Aorta (tissue), 5 donors: ENCODE measurements at regions of chr11 and their contacts with region 1.

Region 1: DNA sequence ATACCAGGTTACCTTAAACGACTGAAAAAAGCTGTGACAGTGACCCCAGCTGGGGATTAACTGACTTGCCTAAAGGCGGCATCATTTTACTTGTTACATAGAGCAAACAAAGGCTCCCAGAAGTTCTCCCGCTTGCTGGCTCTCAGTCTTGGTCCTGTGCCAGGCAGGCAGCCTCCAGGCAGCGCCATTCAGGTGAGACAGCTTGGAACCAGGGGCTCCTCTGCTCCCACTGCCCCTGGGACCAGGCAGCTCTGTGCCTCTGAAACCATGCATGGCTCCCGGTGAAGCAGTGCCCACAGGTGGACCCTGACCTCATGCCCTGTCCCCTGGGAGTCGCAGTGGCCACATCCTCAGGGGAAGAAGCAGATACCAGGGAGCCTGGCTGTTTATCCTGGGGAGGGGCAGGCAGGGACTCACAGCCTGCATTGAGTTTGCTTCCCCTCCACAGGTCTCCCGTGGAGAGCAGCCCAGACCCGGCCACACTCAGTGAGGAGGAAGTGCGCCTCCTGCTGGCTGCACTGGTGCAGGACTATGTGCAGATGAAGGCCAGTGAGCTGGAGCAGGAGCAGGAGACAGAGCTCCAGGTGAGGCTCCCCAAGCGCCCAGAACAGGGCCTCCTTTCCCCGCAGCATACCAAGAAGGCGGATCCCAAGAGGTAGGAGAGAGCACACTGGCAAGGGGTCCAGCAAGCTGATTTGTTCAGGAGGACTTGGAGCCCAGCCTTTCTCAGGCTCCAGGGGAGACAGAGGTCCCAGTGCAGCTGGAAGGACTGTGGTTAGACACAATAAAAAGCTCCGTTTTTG is 15.6 kb upstream of the CYP2R1 start:
- DNase-seq: peak; percentile 90 to 94
- ATAC-seq: peak; percentile 84
- H3K4me3 ChIP-seq: no peak overlapping the region
- H3K27ac ChIP-seq: no peak overlapping the region
- H3K4me1 ChIP-seq: no peaks in the 10 kb centered on the region
- H3K27me3 ChIP-seq: no peaks in the 10 kb centered on the region

Region 2: DNA sequence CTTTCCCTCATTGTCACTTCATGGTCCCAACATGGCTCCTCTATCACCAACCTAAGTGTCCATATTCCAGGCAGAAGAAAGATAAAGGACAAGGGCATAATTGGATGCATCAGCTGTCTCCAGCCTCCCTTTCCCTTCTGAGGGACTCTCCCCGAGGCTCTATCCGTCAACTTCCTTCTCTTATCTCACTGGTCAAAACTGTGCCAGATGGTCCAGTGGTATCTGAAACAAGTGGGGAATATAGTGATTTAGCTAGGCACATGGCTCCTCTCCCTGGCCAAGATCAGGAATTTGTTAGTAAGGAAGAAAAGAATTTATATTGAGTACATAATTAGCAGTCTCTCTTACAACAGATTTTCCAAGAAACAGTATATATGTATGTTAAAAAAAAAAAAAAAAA is 957.7 kb before region 1 on chr11:
- intact Hi-C with region 1: loop called in 1 of 2 experiments (anchors 5 kb)
- DNase-seq: no peak
- ATAC-seq: no peak
- H3K4me3 ChIP-seq: no peak overlapping the region
- H3K27ac ChIP-seq: no peak overlapping the region
- H3K4me1 ChIP-seq: no peaks in the 10 kb centered on the region
- H3K27me3 ChIP-seq: peaks cover 0 to 2% of the 10 kb centered on the region in 2 donors

Region 3: GRCh38 chr11:14537134-14537599 is 370.4 kb before region 1 on chr11:
- intact Hi-C with region 1: loop called (anchors 2 to 5 kb)
- DNase-seq: peak in 1 of 2 donors; percentile 47
- ATAC-seq: peak; percentile 62
- H3K4me3 ChIP-seq: no peak overlapping the region
- H3K27ac ChIP-seq: no peak overlapping the region
- H3K4me1 ChIP-seq: peaks cover 0 to 3% of the 10 kb centered on the region in 2 donors
- H3K27me3 ChIP-seq: no peaks in the 10 kb centered on the region

Region 4: DNA sequence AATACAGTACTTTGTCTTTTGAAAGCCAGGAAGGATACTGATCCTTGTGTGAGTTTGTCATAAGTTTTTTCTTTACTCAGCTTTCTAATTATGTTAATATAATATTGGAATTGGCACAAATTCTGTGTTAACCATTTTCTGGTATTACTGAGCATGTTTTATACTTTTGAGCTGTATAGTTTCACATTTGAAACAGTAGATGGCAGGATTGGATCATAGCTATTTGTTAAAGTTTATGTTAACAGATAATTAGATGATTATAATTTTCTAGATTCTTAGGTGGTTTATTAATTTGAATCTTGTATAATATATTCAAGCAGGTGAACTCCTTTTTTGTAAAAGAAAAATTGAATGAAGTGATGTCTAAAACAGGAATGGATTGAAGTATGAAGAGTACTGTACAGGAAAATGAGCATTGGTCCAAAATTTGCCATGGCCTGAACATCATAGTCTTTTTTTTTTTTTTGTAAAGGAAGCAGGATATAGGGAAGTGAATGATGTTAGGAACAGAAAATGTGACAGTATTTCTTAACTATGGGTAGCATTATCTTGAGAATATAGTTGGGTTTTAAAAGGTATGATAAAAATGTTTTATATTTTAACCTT is 117.6 kb before region 1 on chr11:
- intact Hi-C with region 1: loop called in 1 of 2 experiments (anchors 5 kb)
- DNase-seq: no peak
- ATAC-seq: no peak
- H3K4me3 ChIP-seq: no peak overlapping the region
- H3K27ac ChIP-seq: no peak overlapping the region
- H3K4me1 ChIP-seq: peaks cover 0 to under 1% of the 10 kb centered on the region in 2 donors
- H3K27me3 ChIP-seq: no peaks in the 10 kb centered on the region

Region 5: DNA sequence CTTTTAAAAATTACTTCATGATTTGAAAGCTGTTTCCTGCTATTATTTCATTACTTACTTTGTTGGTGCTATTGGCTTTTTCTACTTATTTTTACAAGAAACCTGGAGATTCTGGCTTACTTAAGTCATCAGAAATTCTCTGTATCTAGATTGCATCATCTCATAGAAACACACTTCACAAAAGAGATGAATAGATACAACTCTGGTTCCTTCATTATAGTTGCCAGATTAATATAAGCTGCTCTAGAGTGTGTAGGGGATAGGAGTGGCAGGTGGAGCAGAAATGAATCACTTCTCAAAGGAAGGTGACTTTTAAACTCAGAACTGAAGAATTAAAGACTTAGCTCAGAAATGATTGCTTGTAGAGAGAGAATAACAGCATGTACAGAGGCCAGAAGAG is 35.6 kb before region 1 on chr11:
- intact Hi-C with region 1: no loop called
- DNase-seq: no peak
- ATAC-seq: no peak
- H3K4me3 ChIP-seq: no peak overlapping the region
- H3K27ac ChIP-seq: no peak overlapping the region
- H3K4me1 ChIP-seq: no peaks in the 10 kb centered on the region
- H3K27me3 ChIP-seq: no peaks in the 10 kb centered on the region

Region 6: GRCh38 chr11:14980854-14981253 is 73.2 kb after region 1 on chr11:
- intact Hi-C with region 1: loop called in 1 of 2 experiments (anchors 5 kb)
- DNase-seq: no peak
- ATAC-seq: peak; percentile 83
- H3K4me3 ChIP-seq: no peak overlapping the region
- H3K27ac ChIP-seq: no peak overlapping the region
- H3K4me1 ChIP-seq: peaks cover 0 to 4% of the 10 kb centered on the region in 2 donors
- H3K27me3 ChIP-seq: peaks cover 0 to 1% of the 10 kb centered on the region in 2 donors

Region 7: GRCh38 chr11:15053191-15053685 is 145.6 kb after region 1 on chr11:
- intact Hi-C with region 1: no loop called
- DNase-seq: no peak
- ATAC-seq: no peak
- H3K4me3 ChIP-seq: no peak overlapping the region
- H3K27ac ChIP-seq: no peak overlapping the region
- H3K4me1 ChIP-seq: no peaks in the 10 kb centered on the region
- H3K27me3 ChIP-seq: no peaks in the 10 kb centered on the region

Region 8: DNA sequence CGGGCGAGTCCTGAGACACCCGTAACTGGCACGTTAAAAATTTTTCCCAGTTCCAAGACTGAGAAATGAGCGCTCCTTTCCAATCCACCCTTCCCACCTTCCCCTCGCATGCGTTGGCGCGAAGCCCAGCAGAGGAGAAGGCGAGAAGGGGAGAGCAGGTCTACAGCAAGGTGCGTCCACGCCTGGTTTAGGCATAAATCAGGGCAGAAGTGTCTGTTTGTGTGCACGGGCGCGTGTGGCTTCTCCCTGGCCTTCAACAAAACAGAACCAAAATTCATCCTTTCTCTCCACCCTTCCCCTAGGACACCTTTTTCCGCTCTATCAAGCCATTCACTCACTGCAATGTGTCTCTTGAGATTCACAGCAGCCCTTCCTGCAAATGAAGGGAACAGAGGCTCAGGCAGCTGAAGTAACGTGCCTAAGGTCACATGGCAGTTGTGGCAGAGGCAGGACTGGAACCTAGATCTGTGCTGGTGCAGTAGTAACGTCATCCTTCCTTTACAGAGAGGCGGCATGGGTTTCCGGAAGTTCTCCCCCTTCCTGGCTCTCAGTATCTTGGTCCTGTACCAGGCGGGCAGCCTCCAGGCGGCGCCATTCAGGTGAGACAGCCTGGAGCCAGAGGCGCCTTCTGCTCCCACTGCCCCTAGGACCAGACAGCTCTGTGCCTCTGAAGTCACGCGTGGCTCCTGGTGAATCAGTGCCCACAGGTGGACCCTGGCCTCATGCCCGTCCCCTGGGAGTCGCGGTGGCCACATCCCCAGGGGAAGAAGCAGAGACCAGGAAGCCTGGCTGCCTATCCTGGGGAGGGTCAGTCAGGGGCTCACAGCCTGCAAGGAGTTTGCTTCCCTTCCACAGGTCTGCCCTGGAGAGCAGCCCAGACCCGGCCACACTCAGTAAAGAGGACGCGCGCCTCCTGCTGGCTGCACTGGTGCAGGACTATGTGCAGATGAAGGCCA is 166.9 kb after region 1 on chr11:
- intact Hi-C with region 1: loop called (anchors 2 kb)
- DNase-seq: peak; percentile 88 to 96
- ATAC-seq: peak; percentile 83
- H3K4me3 ChIP-seq: no peak overlapping the region
- H3K27ac ChIP-seq: no peak overlapping the region
- H3K4me1 ChIP-seq: no peaks in the 10 kb centered on the region
- H3K27me3 ChIP-seq: no peaks in the 10 kb centered on the region

Region 9: DNA sequence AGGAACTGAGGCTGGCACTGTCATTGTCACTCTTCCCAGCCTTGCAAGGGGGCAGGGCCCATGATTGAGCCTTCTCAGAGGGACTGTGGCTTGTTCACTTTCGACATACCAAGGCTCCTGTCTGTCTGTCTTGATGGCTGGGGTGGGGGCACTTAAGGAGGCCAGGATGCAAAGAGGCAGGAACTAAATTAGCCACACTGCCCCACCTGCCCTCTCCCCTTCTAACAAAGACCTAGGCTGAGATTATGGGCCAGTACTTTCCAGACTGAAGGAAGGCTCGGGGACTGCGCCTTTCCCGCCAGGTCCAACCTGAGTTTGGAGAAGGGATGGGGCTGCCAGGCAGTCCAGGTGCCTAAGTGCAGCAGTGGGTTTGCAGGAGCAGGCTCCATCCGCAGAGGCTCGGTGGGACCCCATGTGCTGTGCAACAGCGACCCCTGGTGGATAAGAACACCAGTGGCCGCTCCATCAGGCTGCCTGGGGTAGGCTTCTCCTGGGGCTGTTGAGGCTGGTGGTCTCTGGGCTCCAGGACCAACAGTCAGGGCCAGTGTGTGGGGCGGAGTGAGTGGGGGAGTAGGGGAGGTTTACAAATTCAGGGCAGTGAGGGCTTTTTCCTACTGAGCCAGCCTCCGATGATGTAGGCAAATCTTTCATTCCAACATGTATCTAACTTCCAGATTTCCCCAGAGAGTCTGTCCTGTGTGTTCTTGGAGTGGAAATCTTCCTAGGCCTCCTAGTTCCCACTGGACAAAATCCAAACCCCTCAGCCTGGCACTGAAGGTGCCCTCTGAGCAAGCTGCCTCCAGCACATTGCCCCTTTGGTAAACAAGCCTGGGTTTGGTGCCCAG is 301.0 kb after region 1 on chr11:
- intact Hi-C with region 1: loop called (anchors 10 kb)
- DNase-seq: peak; percentile 77 to 89
- ATAC-seq: peak; percentile 91
- H3K4me3 ChIP-seq: no peak overlapping the region
- H3K27ac ChIP-seq: no peak overlapping the region
- H3K4me1 ChIP-seq: no peaks in the 10 kb centered on the region
- H3K27me3 ChIP-seq: no peaks in the 10 kb centered on the region